BJ (cell line): ENCODE measurements at regions of chr1 and their contacts with region 1.

Region 1: GRCh38 chr1:145845514-145846161 is at the start of gene NUDT17:
- DNase-seq: no peak
- H3K4me3 ChIP-seq: peak within 1 kb of the TSS; percentile 60
- H3K27me3 ChIP-seq: no peaks in the 10 kb centered on the region
- CTCF ChIP-seq: peak; percentile 98
- polyA plus RNA-seq, gene NUDT17: 4.3 and 4.5 TPM in 2 replicates

Region 2: DNA sequence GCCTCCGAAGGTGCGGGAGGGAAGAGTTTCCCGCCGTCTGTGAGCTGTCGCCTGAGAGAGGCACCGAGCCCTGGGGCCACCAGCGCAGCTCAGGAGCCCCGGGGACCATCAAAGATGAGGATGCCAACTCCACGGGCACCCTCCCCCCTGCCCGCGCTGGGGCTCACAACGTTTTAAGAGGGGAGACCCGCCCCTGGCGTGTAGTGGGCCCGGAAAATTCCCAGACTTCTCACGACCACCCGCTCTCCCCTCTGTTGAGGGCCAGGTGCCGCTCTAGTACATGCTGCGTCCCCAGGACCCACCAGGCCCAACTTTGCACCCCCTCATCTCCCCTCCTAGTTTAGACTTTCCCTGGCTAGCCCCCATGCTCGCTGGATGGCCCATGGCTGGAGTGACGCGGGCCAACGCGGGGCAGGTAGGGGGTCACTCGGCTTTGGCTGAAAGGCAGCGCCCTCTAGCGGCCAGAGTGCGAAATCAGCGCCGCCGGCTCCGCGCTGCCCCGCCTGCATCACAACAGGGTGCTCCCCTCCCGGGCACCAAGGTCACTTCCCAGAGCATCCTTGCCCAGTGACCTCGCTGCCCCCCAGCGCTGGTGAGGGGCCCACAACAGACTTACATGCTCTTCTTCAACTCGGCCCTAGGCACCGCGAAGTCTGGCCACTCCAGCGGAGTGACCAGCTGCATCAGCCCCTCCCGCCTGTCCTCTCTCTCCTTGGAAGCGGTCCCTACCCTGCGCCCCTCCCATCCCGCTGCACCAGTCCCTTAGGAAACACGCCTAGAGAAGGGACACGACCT is 124.6 kb before region 1 on chr1:
- CTCF ChIA-PET with region 1: interaction called, 11 read pairs
- POLR2A ChIA-PET with region 1: no interaction called
- DNase-seq: no peak
- H3K4me3 ChIP-seq: peak overlapping the region; percentile 37
- H3K27me3 ChIP-seq: no peaks in the 10 kb centered on the region
- CTCF ChIP-seq: peak; percentile 94

Region 3: DNA sequence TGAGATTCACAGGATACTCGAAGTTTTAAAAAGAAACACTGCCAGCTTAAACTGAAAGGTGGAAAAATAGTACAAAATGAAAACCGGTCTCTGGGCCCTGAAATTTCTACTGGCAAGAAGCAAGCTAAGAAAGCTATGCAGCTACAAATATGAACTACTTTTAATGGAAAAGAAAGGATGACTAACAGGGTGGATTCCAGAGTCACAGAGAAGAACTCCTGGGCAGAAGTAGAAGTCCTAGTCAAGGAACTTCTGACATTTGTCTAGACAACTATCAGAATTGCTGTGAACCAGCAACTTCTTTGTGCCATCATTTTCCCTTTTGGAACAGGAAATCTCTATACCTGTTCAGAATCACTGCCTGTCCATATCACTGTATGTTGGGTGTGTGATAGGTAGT is 88.2 kb before region 1 on chr1:
- CTCF ChIA-PET with region 1: no interaction called
- POLR2A ChIA-PET with region 1: no interaction called
- DNase-seq: no peak
- H3K4me3 ChIP-seq: no peak overlapping the region
- H3K27me3 ChIP-seq: no peaks in the 10 kb centered on the region
- CTCF ChIP-seq: no peak

Region 4: GRCh38 chr1:145804235-145805045 is 41.2 kb before region 1 on chr1:
- CTCF ChIA-PET with region 1: no interaction called
- POLR2A ChIA-PET with region 1: no interaction called
- DNase-seq: no peak
- H3K4me3 ChIP-seq: no peak overlapping the region
- H3K27me3 ChIP-seq: no peaks in the 10 kb centered on the region
- CTCF ChIP-seq: no peak

Region 5: GRCh38 chr1:145858894-145859490 is 13.4 kb after region 1 on chr1 and contains the start of gene PIAS3:
- CTCF ChIA-PET with region 1: interaction called, 179 read pairs
- POLR2A ChIA-PET with region 1: interaction called, 3 read pairs
- DNase-seq: peak; percentile 65
- H3K4me3 ChIP-seq: peak within 1 kb of the TSS; percentile 90
- H3K27me3 ChIP-seq: no peaks in the 10 kb centered on the region
- CTCF ChIP-seq: no peak
- polyA plus RNA-seq, gene PIAS3: 30.0 and 38.0 TPM in 2 replicates

Region 6: DNA sequence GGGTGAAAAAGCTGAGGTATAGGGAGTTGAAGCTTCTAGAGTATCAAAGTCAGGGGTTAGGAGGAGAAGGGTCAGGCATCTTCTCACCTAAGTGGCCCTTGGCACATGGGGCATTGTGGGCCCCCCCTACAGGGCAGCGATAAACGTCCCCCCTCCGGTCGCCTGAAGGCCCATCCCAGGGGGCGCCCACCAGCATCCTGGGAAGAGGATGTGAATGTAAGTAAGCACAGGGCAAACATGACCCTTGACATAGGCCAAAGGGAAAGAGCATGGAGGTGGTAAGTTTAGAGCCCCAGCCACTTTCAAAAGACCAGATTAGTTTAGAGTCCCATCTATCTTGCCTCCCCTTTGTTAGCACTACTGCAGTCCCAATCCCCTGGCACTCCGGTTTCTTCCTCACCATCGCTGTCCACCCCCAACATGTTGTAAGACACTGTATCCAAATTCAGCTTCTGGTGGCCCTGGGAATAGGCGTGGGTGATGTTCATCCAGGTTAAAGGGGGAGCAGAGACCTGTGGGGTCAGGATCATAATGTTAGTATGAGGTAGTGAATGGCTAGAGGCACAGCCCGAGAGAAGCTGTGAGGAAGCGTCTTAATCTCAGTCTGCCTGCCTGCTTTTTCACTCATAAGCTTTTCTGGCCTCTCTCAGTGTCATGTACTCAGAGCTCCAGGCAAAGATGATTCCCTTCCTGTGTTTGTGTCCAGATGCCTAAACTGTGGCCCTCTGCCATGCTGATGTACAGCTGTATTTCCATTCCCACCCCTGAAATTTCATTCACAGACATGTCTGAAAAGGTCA is 61.5 kb after region 1 on chr1:
- CTCF ChIA-PET with region 1: interaction called, 58 read pairs
- POLR2A ChIA-PET with region 1: no interaction called
- DNase-seq: no peak
- H3K4me3 ChIP-seq: no peak overlapping the region
- H3K27me3 ChIP-seq: no peaks in the 10 kb centered on the region
- CTCF ChIP-seq: no peak

Region 7: GRCh38 chr1:145978854-145979759 is 133.5 kb after region 1 on chr1:
- CTCF ChIA-PET with region 1: interaction called, 26 read pairs
- POLR2A ChIA-PET with region 1: no interaction called
- DNase-seq: peak; percentile 100
- H3K4me3 ChIP-seq: peak overlapping the region; percentile 10
- H3K27me3 ChIP-seq: no peaks in the 10 kb centered on the region
- CTCF ChIP-seq: peak; percentile 45

Region 8: DNA sequence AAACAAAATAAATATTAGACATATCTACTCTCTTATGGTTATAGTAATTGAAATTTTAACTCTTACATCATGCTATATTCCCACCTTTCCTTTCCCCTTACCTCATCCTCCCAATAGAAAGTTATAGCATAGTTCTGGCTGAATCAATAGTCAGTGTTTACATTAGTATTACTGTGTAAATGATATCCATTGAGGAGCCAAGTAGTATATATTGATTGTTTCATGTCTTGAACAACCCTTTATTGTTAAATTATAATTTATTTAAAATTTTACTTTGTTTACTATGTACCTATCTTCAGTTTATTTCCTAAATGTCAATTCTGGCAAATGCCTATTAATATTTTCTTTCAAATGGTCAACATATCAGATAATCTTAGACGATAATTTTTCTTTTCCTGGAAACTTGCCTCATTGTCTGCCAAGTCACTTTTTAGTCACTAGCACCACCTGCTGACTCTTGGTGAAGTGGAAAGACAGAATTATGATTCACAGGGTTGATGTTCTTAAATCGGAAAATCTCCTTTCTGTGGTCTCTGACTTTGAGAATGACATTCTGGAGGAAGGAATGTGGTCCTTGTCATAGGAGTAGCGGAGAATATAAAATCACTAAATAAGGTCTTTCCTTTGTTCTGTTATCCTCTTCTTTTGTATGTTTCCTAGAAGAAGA is 167.2 kb after region 1 on chr1:
- CTCF ChIA-PET with region 1: interaction called, 31 read pairs
- POLR2A ChIA-PET with region 1: no interaction called
- DNase-seq: no peak
- H3K4me3 ChIP-seq: no peak overlapping the region
- H3K27me3 ChIP-seq: no peaks in the 10 kb centered on the region
- CTCF ChIP-seq: peak; percentile 73